ENCODE measurements at regions of chr12 and their contacts with region 1.

Region 1: DNA sequence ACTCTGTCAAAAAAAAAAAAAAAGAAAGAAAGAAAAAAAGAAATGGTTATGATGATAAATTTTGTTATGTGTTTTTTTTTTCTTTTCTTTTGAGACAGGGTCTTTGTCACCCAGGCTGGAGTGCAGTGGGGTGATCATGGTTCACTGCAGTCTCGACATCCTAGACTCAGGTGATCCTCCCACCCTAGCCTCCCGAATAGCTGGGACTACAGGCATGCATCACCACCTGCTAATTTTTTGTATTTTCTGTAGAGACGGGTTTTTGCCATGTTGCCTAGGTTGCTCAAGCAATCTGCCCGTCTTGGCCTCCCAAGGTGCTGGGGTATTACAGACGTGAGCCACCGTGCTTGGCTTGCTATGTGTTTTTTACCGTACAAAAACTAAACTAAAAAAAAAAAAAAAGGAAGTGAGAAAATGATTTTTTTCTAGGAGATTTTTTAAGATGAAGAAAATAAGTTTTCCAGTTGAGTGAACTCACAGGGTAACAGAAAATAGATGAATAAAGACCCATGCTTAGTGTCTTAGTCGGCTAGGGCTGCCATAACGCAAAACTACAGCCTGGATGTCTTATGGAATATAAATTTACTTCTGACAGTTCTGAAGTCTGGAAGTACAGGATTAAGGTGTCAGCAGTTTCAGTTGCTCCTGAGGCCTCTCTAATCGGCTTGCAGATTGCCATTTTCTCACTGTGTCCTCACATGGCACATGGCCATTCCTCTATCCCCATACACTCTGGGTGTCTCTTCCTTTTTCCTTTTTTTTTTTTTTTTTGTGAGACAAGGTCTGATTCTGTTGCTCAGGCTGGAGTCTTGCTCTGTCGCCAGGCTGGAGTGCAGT is 13.2 kb upstream of the APOF start:
- DNase-seq: no peak
- H3K4me3 ChIP-seq: no peak overlapping the region
- H3K27ac ChIP-seq: no peak overlapping the region
- H3K4me1 ChIP-seq: no peaks in the 10 kb centered on the region
- H3K27me3 ChIP-seq: no peaks in the 10 kb centered on the region
- CTCF ChIP-seq: no peak
- POLR2A ChIP-seq: no peak

Region 2: GRCh38 chr12:55996715-55997534 is 378.9 kb before region 1 on chr12 and contains the start of gene SUOX:
- intact Hi-C with region 1: no loop called
- DNase-seq: peak; percentile 96 to 98
- H3K4me3 ChIP-seq: peak within 1 kb of the TSS; percentile 60 to 63
- H3K27ac ChIP-seq: peak within 1 kb of the TSS; percentile 81 to 85
- H3K4me1 ChIP-seq: no peaks in the 10 kb centered on the region
- H3K27me3 ChIP-seq: no peaks in the 10 kb centered on the region
- CTCF ChIP-seq: no peak
- POLR2A ChIP-seq: peak; percentile 56 to 63
- total RNA-seq, gene SUOX: 5.1 to 35.5 (median 26.7) TPM

Region 3: GRCh38 chr12:56127888-56128669 is 247.7 kb before region 1 on chr12 and contains the start of gene ESYT1:
- intact Hi-C with region 1: no loop called
- DNase-seq: peak; percentile 98 to 100
- H3K4me3 ChIP-seq: peak within 1 kb of the TSS; percentile 56 to 95
- H3K27ac ChIP-seq: peak within 1 kb of the TSS; percentile 89 to 91
- H3K4me1 ChIP-seq: peaks cover 8 to 10% of the 10 kb centered on the region in 2 donors
- H3K27me3 ChIP-seq: no peaks in the 10 kb centered on the region
- CTCF ChIP-seq: peak in 1 of 4 experiments; percentile 39
- POLR2A ChIP-seq: peak; percentile 97 to 99
- total RNA-seq, gene ESYT1: 98.4 to 203 (median 134) TPM

Region 4: GRCh38 chr12:56387152-56387736 is 11.4 kb after region 1 on chr12:
- intact Hi-C with region 1: no loop called
- DNase-seq: no peak
- H3K4me3 ChIP-seq: no peak overlapping the region
- H3K27ac ChIP-seq: no peak overlapping the region
- H3K4me1 ChIP-seq: no peaks in the 10 kb centered on the region
- H3K27me3 ChIP-seq: no peaks in the 10 kb centered on the region
- CTCF ChIP-seq: no peak
- POLR2A ChIP-seq: no peak

Region 5: DNA sequence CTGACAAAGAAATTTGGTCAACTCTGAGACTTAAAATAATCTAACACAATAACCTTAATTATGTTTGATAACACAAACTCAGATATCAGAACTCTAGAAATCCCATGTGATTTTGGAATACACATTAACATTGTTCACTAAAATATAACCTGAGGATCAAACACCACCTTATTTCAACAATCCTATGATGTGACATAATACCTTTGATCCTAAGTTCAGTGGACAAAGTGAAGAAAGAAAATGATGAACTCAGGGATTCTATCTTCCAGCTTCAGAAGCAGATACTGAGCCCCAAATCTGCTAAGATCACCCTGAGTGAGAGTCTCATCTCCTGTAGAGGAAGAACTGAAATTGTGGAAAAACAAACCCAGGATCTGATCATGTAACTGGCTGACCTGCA is 22.5 kb after region 1 on chr12:
- intact Hi-C with region 1: loop called (anchors 2 kb)
- DNase-seq: no peak
- H3K4me3 ChIP-seq: no peak overlapping the region
- H3K27ac ChIP-seq: no peak overlapping the region
- H3K4me1 ChIP-seq: no peaks in the 10 kb centered on the region
- H3K27me3 ChIP-seq: no peaks in the 10 kb centered on the region
- CTCF ChIP-seq: no peak
- POLR2A ChIP-seq: no peak

Region 6: GRCh38 chr12:56979628-56980027 is 603.8 kb after region 1 on chr12:
- intact Hi-C with region 1: no loop called
- DNase-seq: no peak
- H3K4me3 ChIP-seq: no peak overlapping the region
- H3K27ac ChIP-seq: no peak overlapping the region
- H3K4me1 ChIP-seq: no peaks in the 10 kb centered on the region
- H3K27me3 ChIP-seq: no peaks in the 10 kb centered on the region
- CTCF ChIP-seq: no peak
- POLR2A ChIP-seq: no peak

Measured in uterus (tissue), 4 donors.